CD8-positive, alpha-beta T cell (primary cell): ENCODE measurements at regions of chr2 and their contacts with region 1.

Region 1: GRCh38 chr2:20650880-20651730 is at the start of gene HS1BP3:
- DNase-seq: peak; percentile 82 to 95 (median 88)
- ATAC-seq: peak; percentile 91
- H3K4me3 ChIP-seq: peak within 1 kb of the TSS; percentile 76 to 95
- H3K4me3 Mint-ChIP-seq: peak within 1 kb of the TSS; percentile 85
- H3K27ac ChIP-seq: peak within 1 kb of the TSS; percentile 93 to 94
- H3K27ac Mint-ChIP-seq: peak within 1 kb of the TSS; percentile 91
- H3K4me1 ChIP-seq: peaks cover 19% of the 10 kb centered on the region
- H3K4me1 Mint-ChIP-seq: peaks cover 34% of the 10 kb centered on the region
- H3K27me3 ChIP-seq: no peaks in the 10 kb centered on the region
- H3K27me3 Mint-ChIP-seq: peaks cover 2% of the 10 kb centered on the region
- CTCF ChIP-seq: peak; percentile 86
- total RNA-seq, gene HS1BP3: 3.3 to 6.9 TPM

Region 2: DNA sequence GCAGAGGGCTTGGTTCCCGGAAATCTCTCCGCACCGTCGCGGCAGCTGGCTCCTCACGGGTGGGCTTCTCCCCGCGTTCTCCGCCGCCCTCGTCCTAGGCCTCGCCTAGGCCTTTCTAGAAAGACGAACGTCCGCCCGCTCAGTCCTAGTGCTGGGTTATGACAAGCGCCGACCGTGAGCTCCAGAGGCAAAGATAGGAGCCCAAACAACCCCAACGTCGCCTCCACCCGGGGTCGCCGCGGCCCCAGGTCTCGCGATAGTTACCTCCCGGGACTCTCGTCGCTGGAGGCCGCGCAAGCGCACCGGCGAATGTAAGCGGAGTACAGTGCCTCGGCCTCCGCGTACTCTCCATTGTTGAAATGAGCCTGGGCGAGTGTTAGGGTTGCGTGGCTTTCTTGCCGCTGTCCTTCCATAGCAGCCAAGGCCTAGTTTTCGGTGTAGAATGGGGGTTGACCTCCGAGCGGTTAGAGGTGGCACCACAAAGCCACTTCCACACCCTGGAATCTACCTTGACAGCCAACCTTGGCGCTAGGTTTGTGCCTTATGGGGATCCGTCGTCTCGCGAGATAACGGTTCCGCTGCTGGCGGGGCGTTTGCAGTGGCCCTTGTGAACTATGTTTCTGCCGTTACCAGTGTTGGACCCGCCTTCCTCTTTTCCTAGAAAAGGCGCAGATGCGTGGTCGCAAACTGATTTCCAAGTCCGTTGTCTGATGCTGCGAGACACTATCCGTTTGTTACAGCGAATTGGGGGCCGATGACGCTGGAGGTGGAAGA is 749.5 kb before region 1 on chr2 and contains the start of gene TTC32:
- CTCF ChIA-PET with region 1: no interaction called
- POLR2A ChIA-PET with region 1: interaction called, 5 read pairs
- intact Hi-C with region 1: loop called in 1 of 2 experiments (anchors 10 kb)
- DNase-seq: peak; percentile 87 to 96 (median 93)
- ATAC-seq: peak; percentile 86
- H3K4me3 ChIP-seq: peak within 1 kb of the TSS; percentile 83
- H3K4me3 Mint-ChIP-seq: peak within 1 kb of the TSS; percentile 91
- H3K27ac ChIP-seq: peak within 1 kb of the TSS; percentile 89 to 94
- H3K27ac Mint-ChIP-seq: peak within 1 kb of the TSS; percentile 96
- H3K4me1 ChIP-seq: peaks cover 33% of the 10 kb centered on the region
- H3K4me1 Mint-ChIP-seq: peaks cover 30% of the 10 kb centered on the region
- H3K27me3 ChIP-seq: peaks cover 0 to 3% of the 10 kb centered on the region in 2 experiments
- H3K27me3 Mint-ChIP-seq: peaks cover 4% of the 10 kb centered on the region
- CTCF ChIP-seq: no peak
- total RNA-seq, gene TTC32: 33.7 to 35.8 TPM

Region 3: GRCh38 chr2:20051532-20052228 is 599.4 kb before region 1 on chr2 and contains the start of gene LAPTM4A:
- CTCF ChIA-PET with region 1: no interaction called
- POLR2A ChIA-PET with region 1: no interaction called
- intact Hi-C with region 1: loop called (anchors 1 to 5 kb)
- DNase-seq: peak; percentile 95 to 100 (median 97)
- ATAC-seq: peak; percentile 88
- H3K4me3 ChIP-seq: peak within 1 kb of the TSS; percentile 82 to 90
- H3K4me3 Mint-ChIP-seq: no peak within 1 kb of the TSS
- H3K27ac ChIP-seq: peak within 1 kb of the TSS; percentile 99
- H3K27ac Mint-ChIP-seq: no peak within 1 kb of the TSS
- H3K4me1 ChIP-seq: peaks cover 28% of the 10 kb centered on the region
- H3K4me1 Mint-ChIP-seq: peaks cover 31% of the 10 kb centered on the region
- H3K27me3 ChIP-seq: no peaks in the 10 kb centered on the region
- H3K27me3 Mint-ChIP-seq: peaks cover 19% of the 10 kb centered on the region
- CTCF ChIP-seq: no peak
- total RNA-seq, gene LAPTM4A: 92.4 to 98.8 TPM

Region 4: DNA sequence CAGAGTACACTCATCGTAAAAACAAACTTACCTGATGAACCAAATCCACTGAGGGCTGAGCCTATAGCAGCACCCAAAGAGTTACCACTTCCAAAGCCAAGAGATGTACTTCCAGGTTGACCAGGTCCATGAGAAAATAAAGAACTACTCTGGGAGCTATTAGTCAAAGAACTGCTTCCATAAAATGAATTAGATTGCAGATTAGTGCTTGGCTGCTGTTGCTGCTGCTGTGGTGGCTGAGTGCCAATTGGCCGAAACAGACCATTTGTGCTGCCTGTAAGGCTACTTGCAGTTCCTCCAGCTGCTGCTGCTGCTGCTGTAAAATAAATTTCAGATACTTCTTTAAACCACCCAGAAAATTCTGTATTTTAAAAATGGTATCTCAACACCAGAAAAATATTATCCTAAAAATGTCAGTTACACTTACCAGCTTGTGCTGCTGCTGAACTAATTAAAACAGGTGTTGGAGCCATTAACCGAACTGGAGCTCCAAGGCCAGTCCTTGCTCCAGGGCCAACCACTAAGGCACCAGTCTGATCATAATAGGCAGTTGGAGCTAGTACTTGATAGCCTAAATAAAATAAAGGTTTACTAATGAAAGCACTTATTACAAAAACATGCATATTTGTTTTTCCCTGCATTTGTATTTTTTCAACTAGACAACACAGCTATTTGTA is 368.1 kb before region 1 on chr2:
- CTCF ChIA-PET with region 1: no interaction called
- POLR2A ChIA-PET with region 1: no interaction called
- intact Hi-C with region 1: no loop called
- DNase-seq: no peak
- ATAC-seq: no peak
- H3K4me3 ChIP-seq: no peak overlapping the region
- H3K4me3 Mint-ChIP-seq: no peak overlapping the region
- H3K27ac ChIP-seq: no peak overlapping the region
- H3K27ac Mint-ChIP-seq: no peak overlapping the region
- H3K4me1 ChIP-seq: peaks cover 11% of the 10 kb centered on the region
- H3K4me1 Mint-ChIP-seq: peaks cover 21% of the 10 kb centered on the region
- H3K27me3 ChIP-seq: no peaks in the 10 kb centered on the region
- H3K27me3 Mint-ChIP-seq: no peaks in the 10 kb centered on the region
- CTCF ChIP-seq: no peak

Region 5: GRCh38 chr2:20350753-20351554 is 300.2 kb before region 1 on chr2 and contains the start of gene PUM2:
- CTCF ChIA-PET with region 1: interaction called, 10 read pairs
- POLR2A ChIA-PET with region 1: interaction called, 4 read pairs
- intact Hi-C with region 1: loop called (anchors 1 kb)
- DNase-seq: peak; percentile 89 to 99 (median 96)
- ATAC-seq: peak; percentile 79
- H3K4me3 ChIP-seq: peak within 1 kb of the TSS; percentile 75 to 82
- H3K4me3 Mint-ChIP-seq: no peak within 1 kb of the TSS
- H3K27ac ChIP-seq: peak within 1 kb of the TSS; percentile 89 to 94
- H3K27ac Mint-ChIP-seq: peak within 1 kb of the TSS; percentile 82
- H3K4me1 ChIP-seq: peaks cover 47% of the 10 kb centered on the region
- H3K4me1 Mint-ChIP-seq: peaks cover 39% of the 10 kb centered on the region
- H3K27me3 ChIP-seq: no peaks in the 10 kb centered on the region
- H3K27me3 Mint-ChIP-seq: no peaks in the 10 kb centered on the region
- CTCF ChIP-seq: no peak
- total RNA-seq, gene PUM2: 91.3 to 93.5 TPM

Region 6: GRCh38 chr2:20438334-20439192 is 212.5 kb before region 1 on chr2:
- CTCF ChIA-PET with region 1: interaction called, 13 read pairs
- POLR2A ChIA-PET with region 1: no interaction called
- intact Hi-C with region 1: no loop called
- DNase-seq: peak in 1 of 9 experiments; percentile 18
- ATAC-seq: no peak
- H3K4me3 ChIP-seq: no peak overlapping the region
- H3K4me3 Mint-ChIP-seq: no peak overlapping the region
- H3K27ac ChIP-seq: no peak overlapping the region
- H3K27ac Mint-ChIP-seq: no peak overlapping the region
- H3K4me1 ChIP-seq: no peaks in the 10 kb centered on the region
- H3K4me1 Mint-ChIP-seq: no peaks in the 10 kb centered on the region
- H3K27me3 ChIP-seq: no peaks in the 10 kb centered on the region
- H3K27me3 Mint-ChIP-seq: peaks cover 20% of the 10 kb centered on the region
- CTCF ChIP-seq: no peak

Region 7: GRCh38 chr2:20661067-20661980 is 10.2 kb after region 1 on chr2:
- CTCF ChIA-PET with region 1: interaction called, 65 read pairs
- POLR2A ChIA-PET with region 1: interaction called, 20 read pairs
- intact Hi-C with region 1: loop called in 1 of 2 experiments (anchors 1 kb)
- DNase-seq: peak; percentile 35 to 82 (median 63)
- ATAC-seq: peak; percentile 90
- H3K4me3 ChIP-seq: no peak overlapping the region
- H3K4me3 Mint-ChIP-seq: no peak overlapping the region
- H3K27ac ChIP-seq: no peak overlapping the region
- H3K27ac Mint-ChIP-seq: no peak overlapping the region
- H3K4me1 ChIP-seq: peaks cover 10% of the 10 kb centered on the region
- H3K4me1 Mint-ChIP-seq: peaks cover 9% of the 10 kb centered on the region
- H3K27me3 ChIP-seq: peaks cover 14 to 31% of the 10 kb centered on the region in 2 experiments
- H3K27me3 Mint-ChIP-seq: peaks cover 52% of the 10 kb centered on the region
- CTCF ChIP-seq: peak; percentile 97